MCF 10A (cell line): ENCODE measurements at regions of chr10 and their contacts with region 1.

Region 1: GRCh38 chr10:8130973-8131911 is 76.8 kb downstream of the GATA3 start:
- DNase-seq: peak; percentile 91
- H3K4me3 Mint-ChIP-seq: peak overlapping the region; percentile 67
- H3K27ac Mint-ChIP-seq: peak overlapping the region; percentile 75
- H3K4me1 Mint-ChIP-seq: peaks cover 34% of the 10 kb centered on the region
- H3K27me3 Mint-ChIP-seq: no peaks in the 10 kb centered on the region
- CTCF ChIP-seq: no peak

Region 2: DNA sequence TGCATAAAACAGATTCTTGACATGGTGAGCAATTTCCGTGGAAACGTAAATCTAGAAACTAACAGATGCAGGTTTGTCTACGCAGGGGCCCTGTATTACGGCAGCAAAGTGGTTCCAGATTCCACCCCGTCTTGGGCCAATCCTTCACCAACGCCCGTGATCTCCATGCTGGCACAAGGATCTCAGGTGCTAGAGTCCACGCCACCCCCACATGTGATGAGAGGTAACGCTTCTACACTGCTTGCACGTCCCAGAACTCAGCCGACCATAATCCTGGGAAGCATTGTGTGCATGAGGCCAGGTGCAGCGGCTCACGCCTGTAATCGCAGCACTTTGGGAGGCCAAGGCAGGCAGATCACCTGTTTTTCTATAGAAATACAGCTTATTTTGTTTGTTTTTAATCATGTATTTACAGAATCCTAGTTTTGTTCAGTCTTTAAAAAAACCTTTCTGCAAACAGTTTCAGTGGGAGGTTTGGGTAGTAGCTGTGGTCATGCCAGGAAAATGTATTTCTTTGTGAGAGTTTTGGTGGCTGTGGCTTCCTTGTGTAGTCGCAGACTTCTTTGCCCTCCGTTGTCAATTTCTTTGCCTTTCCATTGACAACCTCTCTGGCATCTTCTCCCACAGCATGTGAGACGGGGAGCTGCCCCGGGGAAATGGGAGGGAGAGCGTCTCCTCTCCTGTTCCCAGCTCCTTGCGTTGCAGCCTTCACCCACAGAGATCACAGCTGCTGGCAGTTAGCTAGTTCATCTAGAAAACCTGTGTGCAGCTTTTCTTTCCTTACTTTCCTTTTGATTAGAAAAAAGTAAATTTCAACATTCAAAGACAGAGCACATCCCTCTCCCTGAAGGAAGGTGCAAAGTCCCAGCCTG is 392.5 kb before region 1 on chr10:
- CTCF ChIA-PET with region 1: no interaction called
- POLR2A ChIA-PET with region 1: no interaction called
- intact Hi-C with region 1: no loop called
- DNase-seq: no peak
- H3K4me3 Mint-ChIP-seq: no peak overlapping the region
- H3K27ac Mint-ChIP-seq: no peak overlapping the region
- H3K4me1 Mint-ChIP-seq: no peaks in the 10 kb centered on the region
- H3K27me3 Mint-ChIP-seq: no peaks in the 10 kb centered on the region
- CTCF ChIP-seq: no peak

Region 3: DNA sequence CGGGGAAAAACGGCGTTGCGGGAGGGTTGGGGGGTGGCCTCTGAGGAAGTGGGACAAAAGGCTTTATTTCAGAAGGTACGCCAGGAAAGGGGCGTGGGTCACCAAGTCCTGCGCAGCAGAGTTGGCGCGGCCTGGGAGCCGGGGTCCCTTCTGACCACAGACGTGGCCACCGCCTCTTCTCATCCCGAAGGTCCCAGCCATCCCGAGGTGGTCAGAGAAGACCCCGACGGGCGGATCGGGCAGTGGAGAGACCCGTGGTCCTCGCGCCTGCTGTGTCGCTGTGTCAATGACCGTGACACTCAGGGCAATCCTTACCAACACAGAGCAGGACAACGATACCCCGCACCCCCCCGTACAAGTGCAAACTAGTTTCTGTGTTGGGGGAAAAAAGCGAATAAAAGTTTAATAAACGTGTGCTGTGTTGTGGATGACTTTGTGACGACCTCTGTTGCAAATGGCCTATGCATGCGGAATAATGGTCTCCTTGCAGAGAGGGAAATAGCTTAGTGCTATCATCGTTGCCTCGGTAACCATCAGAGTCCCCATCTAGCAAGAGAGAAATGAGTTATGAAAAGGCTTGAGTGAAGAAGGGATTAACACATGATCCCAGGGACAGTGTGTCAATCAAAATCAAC is 96.1 kb before region 1 on chr10:
- CTCF ChIA-PET with region 1: no interaction called
- POLR2A ChIA-PET with region 1: no interaction called
- intact Hi-C with region 1: no loop called
- DNase-seq: no peak
- H3K4me3 Mint-ChIP-seq: no peak overlapping the region
- H3K27ac Mint-ChIP-seq: no peak overlapping the region
- H3K4me1 Mint-ChIP-seq: no peaks in the 10 kb centered on the region
- H3K27me3 Mint-ChIP-seq: peaks cover 31% of the 10 kb centered on the region
- CTCF ChIP-seq: no peak

Region 4: GRCh38 chr10:8059959-8060703 is 71.1 kb before region 1 on chr10:
- CTCF ChIA-PET with region 1: no interaction called
- POLR2A ChIA-PET with region 1: interaction called, 9 read pairs
- intact Hi-C with region 1: loop called (anchors 5 kb)
- DNase-seq: peak; percentile 25
- H3K4me3 Mint-ChIP-seq: peak overlapping the region; percentile 93
- H3K27ac Mint-ChIP-seq: peak overlapping the region; percentile 93
- H3K4me1 Mint-ChIP-seq: peaks cover 32% of the 10 kb centered on the region
- H3K27me3 Mint-ChIP-seq: no peaks in the 10 kb centered on the region
- CTCF ChIP-seq: no peak

Region 5: GRCh38 chr10:8071006-8071405 is 60.2 kb before region 1 on chr10:
- CTCF ChIA-PET with region 1: interaction called, 5 read pairs
- POLR2A ChIA-PET with region 1: interaction called, 17 read pairs
- intact Hi-C with region 1: no loop called
- DNase-seq: peak; percentile 75
- H3K4me3 Mint-ChIP-seq: peak overlapping the region; percentile 44
- H3K27ac Mint-ChIP-seq: peak overlapping the region; percentile 75
- H3K4me1 Mint-ChIP-seq: peaks cover 28% of the 10 kb centered on the region
- H3K27me3 Mint-ChIP-seq: no peaks in the 10 kb centered on the region
- CTCF ChIP-seq: no peak

Region 6: DNA sequence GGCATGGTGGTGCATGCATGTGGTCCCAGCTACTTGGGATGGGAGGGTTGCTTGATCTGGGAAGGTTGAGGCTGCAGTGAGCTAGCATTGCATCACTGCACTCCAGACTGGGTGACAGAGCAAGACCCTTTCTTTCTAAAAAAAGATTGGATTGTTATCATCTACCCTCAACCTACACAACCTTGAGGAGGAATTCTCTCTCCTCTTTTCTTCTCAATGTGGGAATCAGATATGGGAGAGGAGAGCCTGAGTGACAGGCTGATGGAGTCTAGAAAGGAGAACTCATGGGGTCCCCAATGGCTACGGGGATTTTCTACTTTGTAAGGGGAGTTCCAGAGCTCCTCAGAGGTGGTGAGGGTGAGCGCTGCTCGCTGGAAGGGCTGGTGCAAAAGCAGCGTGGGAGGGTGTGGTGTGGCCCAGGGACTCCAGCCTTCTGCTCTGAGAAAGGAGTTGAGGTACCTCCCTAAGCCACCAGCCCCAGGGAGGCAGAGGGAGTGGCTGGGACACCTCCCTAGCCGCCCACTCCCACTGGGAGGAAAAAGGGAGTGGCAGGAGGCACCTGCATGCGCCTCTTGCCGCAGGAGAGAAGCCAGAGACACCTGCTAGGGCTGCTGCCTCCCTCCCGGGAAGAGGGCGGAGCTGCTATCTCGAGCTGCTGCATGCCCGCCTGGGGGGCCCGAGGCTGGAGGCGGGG is 28.4 kb before region 1 on chr10:
- CTCF ChIA-PET with region 1: no interaction called
- POLR2A ChIA-PET with region 1: no interaction called
- intact Hi-C with region 1: no loop called
- DNase-seq: no peak
- H3K4me3 Mint-ChIP-seq: no peak overlapping the region
- H3K27ac Mint-ChIP-seq: no peak overlapping the region
- H3K4me1 Mint-ChIP-seq: no peaks in the 10 kb centered on the region
- H3K27me3 Mint-ChIP-seq: no peaks in the 10 kb centered on the region
- CTCF ChIP-seq: no peak